A549 (cell line): ENCODE measurements at regions of chr5 and their contacts with region 1.

Region 1: DNA sequence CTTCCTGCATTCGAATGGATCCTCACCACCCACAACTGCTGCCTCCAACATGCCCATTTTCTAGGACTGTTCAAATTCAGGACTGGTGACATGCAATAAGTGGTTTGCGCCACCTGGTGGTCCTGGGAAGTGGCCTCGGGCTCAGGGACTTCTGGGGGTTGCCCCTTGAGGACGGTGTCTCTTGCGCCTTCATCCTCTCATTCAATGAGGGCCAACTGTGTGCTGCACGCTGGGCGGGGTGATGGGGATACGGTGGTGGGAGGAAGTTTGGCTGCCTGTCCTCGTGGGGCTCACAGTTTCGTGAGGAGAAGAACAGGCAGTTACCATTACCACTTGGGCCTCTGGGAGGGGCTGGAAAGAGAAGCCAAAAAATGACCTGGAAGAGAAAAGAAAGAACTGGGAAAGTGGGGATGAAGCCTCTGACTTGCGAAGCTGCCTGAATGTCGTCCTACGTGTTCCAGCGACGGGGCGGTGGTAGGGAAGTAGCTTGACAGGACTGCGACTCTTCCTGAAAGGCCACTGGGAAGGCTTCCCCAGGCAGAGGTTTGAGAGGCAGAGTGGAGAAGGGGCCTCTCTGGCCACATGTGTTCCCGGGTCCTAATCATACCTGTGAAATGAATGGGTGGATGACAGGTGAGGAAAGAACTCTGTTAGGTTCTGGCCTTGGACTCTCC is 49.0 kb downstream of the PSD2 start:
- DNase-seq: peak; percentile 85
- ATAC-seq: peak; percentile 67 to 89
- H3K4me3 ChIP-seq: no peak overlapping the region
- H3K27ac ChIP-seq: no peak overlapping the region
- H3K4me1 ChIP-seq: peaks cover 6% of the 10 kb centered on the region
- CTCF ChIP-seq: peak; percentile 85
- EP300 ChIP-seq: no peak
- POLR2A ChIP-seq: no peak
- RAD21 ChIP-seq: peak; percentile 70 to 81

Region 2: DNA sequence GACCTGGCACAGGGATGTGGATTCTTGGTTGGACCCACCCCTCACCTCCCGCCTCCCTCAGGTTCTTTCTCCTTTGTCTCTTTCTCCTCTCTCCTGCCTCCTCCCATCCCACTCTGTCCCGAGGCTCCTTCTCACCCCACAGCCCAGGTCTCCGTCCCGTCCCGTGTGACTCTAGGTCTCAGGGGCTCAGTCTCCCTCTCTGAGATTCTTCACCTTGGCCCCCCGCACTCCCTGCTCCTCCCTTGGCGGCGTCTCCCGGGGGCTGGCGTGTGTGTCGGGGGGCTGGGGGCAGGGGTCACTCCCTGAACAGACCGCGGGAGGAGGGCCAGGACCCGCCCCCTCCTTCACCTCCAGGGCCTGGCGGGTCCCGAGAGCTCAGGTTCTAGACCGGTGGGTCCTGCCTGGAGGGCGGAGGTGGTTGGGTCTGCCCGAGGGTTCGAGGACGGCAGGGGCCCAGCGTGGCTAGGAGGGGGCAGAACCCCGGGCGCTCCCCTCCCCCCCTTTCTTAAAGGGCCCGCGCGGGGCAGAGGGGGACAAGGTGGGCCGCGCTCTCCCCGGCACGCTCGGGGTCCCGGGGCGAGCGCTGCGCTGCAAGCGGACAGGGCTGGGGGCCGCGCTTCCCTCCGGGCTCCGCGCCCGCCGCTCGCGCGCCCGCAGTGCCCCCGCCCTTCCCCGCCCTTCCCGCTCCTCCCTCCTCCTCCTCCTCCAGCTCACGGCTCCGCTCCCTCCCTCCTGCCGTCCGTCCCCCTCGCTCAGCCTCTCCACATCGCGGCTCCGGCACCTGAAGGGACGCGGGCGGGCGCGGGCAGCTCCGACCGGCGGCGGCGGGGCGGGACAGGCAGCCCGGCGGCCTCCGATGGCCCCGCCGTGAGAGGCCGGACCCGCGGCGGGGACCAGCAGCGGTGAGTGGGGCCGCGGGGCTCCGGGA is 49.3 kb before region 1 on chr5 and contains the start of gene PSD2:
- CTCF ChIA-PET with region 1: interaction called, 193 read pairs
- POLR2A ChIA-PET with region 1: no interaction called
- DNase-seq: no peak
- ATAC-seq: peak; percentile 7 to 15; a peak in 2 of 6 replicates
- H3K4me3 ChIP-seq: peak within 1 kb of the TSS; percentile 56
- H3K27ac ChIP-seq: peak within 1 kb of the TSS; percentile 34 to 79; a peak in 4 of 6 replicates
- H3K4me1 ChIP-seq: 0 out of 3 replicates have a peak, but pooled peaks cover 5% of the 10 kb centered on the region
- CTCF ChIP-seq: no peak
- EP300 ChIP-seq: no peak
- POLR2A ChIP-seq: no peak
- RAD21 ChIP-seq: no peak
- polyA plus RNA-seq, gene PSD2: 0.03 TPM in 1 of 2 replicates, not detected in the other

Region 3: GRCh38 chr5:139806726-139807646 is 37.6 kb before region 1 on chr5:
- CTCF ChIA-PET with region 1: interaction called, 12 read pairs
- POLR2A ChIA-PET with region 1: no interaction called
- DNase-seq: no peak
- ATAC-seq: 0 out of 6 replicates have a peak, but pooled peaks of 1 of the 2 experiments have one; percentile 10
- H3K4me3 ChIP-seq: no peak overlapping the region
- H3K27ac ChIP-seq: no peak overlapping the region
- H3K4me1 ChIP-seq: no peaks in the 10 kb centered on the region
- CTCF ChIP-seq: no peak
- EP300 ChIP-seq: no peak
- POLR2A ChIP-seq: no peak
- RAD21 ChIP-seq: no peak

Region 4: DNA sequence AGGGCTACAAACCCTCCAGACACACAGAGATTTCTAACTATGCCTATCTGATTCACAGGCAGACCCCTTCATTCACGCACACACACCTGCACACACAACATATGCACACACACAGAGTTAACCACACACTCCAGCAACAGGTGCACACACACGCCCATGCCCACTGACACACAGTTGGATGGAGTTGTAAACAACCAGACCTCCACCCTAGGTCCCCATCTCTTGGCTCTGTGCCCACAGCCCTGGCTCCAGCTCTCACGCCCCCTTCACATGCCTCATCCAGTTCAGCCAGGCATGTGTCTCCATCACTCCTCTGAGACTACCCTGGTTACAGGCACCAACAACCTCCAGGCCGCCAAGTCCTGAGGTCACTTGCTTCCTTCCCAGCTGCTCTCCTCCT is 12.1 kb after region 1 on chr5:
- CTCF ChIA-PET with region 1: interaction called, 41 read pairs
- POLR2A ChIA-PET with region 1: no interaction called
- DNase-seq: no peak
- ATAC-seq: no peak
- H3K4me3 ChIP-seq: no peak overlapping the region
- H3K27ac ChIP-seq: no peak overlapping the region
- H3K4me1 ChIP-seq: no peaks in the 10 kb centered on the region
- CTCF ChIP-seq: no peak
- EP300 ChIP-seq: no peak
- POLR2A ChIP-seq: no peak
- RAD21 ChIP-seq: no peak

Region 5: GRCh38 chr5:139863855-139864558 is 19.4 kb after region 1 on chr5:
- CTCF ChIA-PET with region 1: interaction called, 41 read pairs
- POLR2A ChIA-PET with region 1: no interaction called
- DNase-seq: peak; percentile 49 to 80
- ATAC-seq: peak; percentile 67 to 90
- H3K4me3 ChIP-seq: no peak overlapping the region
- H3K27ac ChIP-seq: no peak overlapping the region
- H3K4me1 ChIP-seq: 0 out of 3 replicates have a peak, but pooled peaks cover 3% of the 10 kb centered on the region
- CTCF ChIP-seq: peak; percentile 68
- EP300 ChIP-seq: no peak
- POLR2A ChIP-seq: no peak
- RAD21 ChIP-seq: peak; percentile 66 to 72

Region 6: DNA sequence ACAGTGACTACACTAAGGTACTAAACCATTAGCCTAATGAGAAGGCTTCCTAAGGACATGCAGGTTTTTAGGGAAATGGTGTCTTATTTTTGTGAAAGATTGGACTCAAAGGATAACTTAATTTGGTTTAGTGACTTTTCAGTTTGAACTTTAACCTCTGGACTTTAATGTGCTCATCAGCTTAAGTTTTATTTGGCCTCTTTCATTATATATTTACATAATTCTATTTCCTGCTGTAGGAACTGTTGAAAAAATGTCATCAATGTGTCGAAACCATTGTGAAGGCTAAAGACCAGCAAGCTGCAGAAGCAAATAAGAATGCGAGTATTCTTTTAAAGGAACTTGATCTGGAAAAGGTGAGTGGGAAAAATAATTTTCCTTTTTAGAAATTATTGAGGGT is 668.5 kb after region 1 on chr5:
- CTCF ChIA-PET with region 1: no interaction called
- POLR2A ChIA-PET with region 1: no interaction called
- DNase-seq: no peak
- ATAC-seq: no peak
- H3K4me3 ChIP-seq: no peak overlapping the region
- H3K27ac ChIP-seq: no peak overlapping the region
- H3K4me1 ChIP-seq: no peaks in the 10 kb centered on the region
- CTCF ChIP-seq: no peak
- EP300 ChIP-seq: no peak
- POLR2A ChIP-seq: no peak
- RAD21 ChIP-seq: no peak